ENCODE measurements at regions of chr20 and their contacts with region 1.

Region 1: DNA sequence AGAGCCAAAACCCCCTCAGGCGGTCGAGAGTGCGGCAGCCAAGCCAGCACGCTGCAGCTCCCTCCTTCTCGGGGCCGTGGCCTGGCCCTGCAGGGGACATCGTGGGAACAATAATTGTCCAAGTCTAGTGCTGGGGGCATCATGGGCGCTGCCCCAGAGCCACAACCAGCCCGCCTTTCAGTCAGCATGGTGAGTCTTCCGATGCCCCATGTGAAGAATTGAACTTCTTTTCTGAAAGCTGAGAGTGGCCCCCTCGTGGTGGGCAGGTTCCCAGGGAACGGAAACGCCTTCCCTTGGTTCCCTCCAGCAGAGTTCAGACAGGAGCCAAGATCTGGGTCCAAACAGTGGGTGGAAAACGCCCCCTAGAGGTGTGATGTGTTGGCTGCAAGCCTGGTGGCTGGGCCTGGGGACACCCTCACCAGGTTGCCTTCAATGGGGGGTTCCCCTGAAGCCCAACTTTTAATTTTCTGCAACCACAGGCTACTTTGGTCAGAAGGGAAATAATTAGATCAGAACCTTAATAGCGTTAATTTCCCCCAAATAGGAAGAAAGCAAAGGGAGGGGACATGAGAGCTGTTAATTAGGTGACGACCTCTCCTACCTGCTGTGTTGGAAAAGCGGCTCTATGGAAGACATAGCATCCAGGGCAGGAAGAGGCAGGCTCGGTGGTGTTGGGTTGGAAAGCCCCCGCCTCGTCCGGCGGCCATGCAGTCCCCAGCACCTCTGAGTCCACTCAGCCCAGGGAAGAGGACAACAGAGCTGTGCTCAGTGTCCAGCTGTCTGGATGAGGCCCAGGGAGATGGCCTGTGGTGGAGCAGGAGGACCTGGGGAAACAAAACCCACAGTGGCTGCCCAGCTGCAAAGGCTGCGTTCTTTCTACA is 4.7 kb upstream of the MRGBP start:
- DNase-seq: peak; percentile 96
- H3K27ac ChIP-seq: peak overlapping the region; percentile 97
- CTCF ChIP-seq: peak; percentile 100

Region 2: DNA sequence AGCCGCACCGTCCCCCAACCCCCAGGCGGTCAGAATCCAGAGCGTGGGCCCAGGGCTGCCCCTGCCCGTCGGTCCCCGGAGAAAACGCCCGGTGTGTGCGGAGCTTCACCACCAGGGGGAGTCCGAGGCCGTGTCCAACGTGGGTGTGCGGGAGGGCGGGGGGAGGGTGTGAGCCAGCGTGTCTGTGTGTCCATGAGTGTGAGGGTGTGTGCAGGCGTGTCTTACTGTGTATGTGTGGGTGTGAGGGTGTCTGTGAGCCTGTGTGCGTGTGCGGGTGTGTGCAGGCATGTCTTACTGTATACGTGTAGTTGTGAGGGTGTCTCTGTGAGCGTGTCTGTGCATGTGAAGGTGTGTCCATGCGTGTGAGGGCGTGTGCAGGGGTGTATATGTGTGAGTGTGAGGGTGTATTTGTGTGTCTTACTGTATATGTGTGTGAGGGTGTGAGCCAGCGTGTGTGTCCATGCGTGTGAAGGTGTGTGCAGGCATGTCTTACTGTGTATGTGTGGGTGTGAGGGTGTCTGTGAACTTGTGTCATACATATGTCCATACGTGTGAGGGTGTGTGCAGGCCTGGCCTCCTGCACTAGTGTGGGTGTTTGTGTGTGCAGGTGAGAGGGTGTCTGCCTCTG is 291.2 kb before region 1 on chr20:
- CTCF ChIA-PET with region 1: interaction called, 10 read pairs
- POLR2A ChIA-PET with region 1: no interaction called
- DNase-seq: peak; percentile 86
- H3K27ac ChIP-seq: peak overlapping the region; percentile 34
- CTCF ChIP-seq: peak; percentile 99

Region 3: GRCh38 chr20:62656197-62656918 is 135.2 kb before region 1 on chr20:
- CTCF ChIA-PET with region 1: interaction called, 18 read pairs
- POLR2A ChIA-PET with region 1: interaction called, 4 read pairs
- DNase-seq: peak; percentile 91
- H3K27ac ChIP-seq: peak overlapping the region; percentile 84
- CTCF ChIP-seq: no peak

Region 4: GRCh38 chr20:62675156-62675876 is 116.2 kb before region 1 on chr20:
- CTCF ChIA-PET with region 1: interaction called, 70 read pairs
- POLR2A ChIA-PET with region 1: no interaction called
- DNase-seq: no peak
- H3K27ac ChIP-seq: peak overlapping the region; percentile 5; the same call in 1 of the 2 replicates
- CTCF ChIP-seq: no peak

Region 5: GRCh38 chr20:62704301-62704948 is 87.1 kb before region 1 on chr20:
- CTCF ChIA-PET with region 1: interaction called, 63 read pairs
- POLR2A ChIA-PET with region 1: interaction called, 4 read pairs
- DNase-seq: peak; percentile 99
- H3K27ac ChIP-seq: peak overlapping the region; percentile 96
- CTCF ChIP-seq: no peak

Region 6: GRCh38 chr20:62740286-62741141 is 51.0 kb before region 1 on chr20:
- CTCF ChIA-PET with region 1: interaction called, 17 read pairs
- POLR2A ChIA-PET with region 1: no interaction called
- DNase-seq: peak; percentile 98
- H3K27ac ChIP-seq: peak overlapping the region; percentile 100
- CTCF ChIP-seq: no peak; the same call in 1 of the 2 replicates

Region 7: GRCh38 chr20:62808211-62808865 is 16.8 kb after region 1 on chr20:
- CTCF ChIA-PET with region 1: interaction called, 35 read pairs
- POLR2A ChIA-PET with region 1: no interaction called
- DNase-seq: peak; percentile 84
- H3K27ac ChIP-seq: peak overlapping the region; percentile 97
- CTCF ChIP-seq: peak; percentile 99

Region 8: DNA sequence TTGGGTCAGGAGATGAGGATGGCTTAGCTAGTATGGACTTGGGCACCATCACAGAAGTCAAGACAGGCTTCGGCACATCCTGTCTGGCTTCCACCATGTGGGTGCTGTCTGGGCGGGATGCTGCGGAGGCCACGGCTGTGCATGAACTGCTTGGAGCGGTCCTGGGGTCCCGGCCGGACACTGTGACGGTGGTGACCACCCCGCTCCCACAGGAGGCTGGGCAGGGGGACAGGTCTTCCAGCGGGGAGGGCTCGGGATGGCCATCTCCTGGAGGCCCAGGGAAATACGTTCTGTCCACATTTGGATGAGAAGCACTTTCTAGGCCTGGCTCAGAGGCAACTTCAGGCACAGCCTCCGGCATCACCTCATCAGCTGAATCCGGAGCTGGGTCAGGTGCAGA is 102.2 kb after region 1 on chr20:
- CTCF ChIA-PET with region 1: no interaction called
- POLR2A ChIA-PET with region 1: no interaction called
- DNase-seq: no peak
- H3K27ac ChIP-seq: no peak overlapping the region
- CTCF ChIP-seq: no peak

Region 9: DNA sequence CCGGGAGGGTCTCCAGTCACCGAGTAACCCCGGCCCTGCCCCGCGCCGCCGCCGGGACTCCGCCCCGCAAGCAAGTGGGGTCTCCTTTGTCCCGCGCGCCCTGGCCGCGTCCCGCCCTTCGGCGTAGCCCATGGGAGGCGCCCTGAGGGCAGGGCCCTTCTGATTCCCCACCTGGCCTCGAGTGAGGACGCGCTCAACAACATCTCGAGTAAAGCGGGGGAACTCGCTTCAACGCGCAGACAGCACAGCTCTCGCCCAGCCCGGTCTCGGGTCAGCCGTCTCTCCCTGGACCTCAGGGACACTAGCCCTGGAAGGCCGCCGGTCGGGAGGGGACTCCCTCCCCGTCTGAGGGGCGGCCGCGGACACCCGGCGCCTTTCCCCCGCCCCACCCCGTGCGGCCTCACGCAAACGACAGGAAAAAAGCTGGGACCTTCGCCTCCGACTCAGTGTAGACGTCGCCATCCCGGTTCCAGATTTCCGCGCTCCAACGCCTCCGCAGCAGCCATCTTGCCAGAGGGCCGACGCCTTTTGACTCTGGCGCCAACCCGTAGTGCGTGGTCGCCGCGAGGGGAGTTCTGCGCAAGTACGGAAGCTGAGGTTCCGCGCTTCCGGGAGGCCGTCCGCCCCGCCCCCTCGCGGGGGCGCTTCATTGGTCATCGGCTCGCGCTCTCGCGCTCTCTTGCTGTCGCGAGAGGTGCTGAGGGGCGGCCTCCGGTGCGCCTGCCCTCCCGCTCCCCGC is 146.0 kb after region 1 on chr20:
- CTCF ChIA-PET with region 1: no interaction called
- POLR2A ChIA-PET with region 1: no interaction called
- DNase-seq: peak; percentile 99
- H3K27ac ChIP-seq: peak overlapping the region; percentile 90
- CTCF ChIP-seq: no peak

Measured in RWPE1 (cell line).